Right ventricle myocardium superior (tissue), 1 donor: ENCODE measurements at regions of chr5 and their contacts with region 1.

Region 1: GRCh38 chr5:10424124-10424731 is 17.5 kb upstream of the ROPN1L start:
- DNase-seq: no peak
- ATAC-seq: peak; percentile 77

Region 2: DNA sequence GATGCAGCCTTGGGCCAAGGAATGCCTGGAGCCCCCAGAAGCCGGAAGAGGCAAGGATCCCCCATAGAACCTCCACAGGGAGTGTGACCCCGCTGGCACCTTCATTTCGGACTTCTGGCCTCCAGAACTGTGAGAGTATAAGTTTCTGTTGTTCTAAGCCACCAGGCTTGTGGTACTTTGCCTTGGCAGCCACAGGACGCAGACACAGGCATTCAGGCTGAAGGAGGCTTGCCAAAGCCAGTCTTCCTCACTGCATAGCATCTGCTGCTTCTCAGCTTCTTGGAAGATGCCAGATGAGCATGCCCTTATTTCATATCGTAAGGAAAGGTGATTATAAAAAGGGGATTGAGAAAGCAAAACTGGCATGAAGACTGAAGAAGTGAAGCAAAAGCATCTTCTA is 733.0 kb before region 1 on chr5:
- intact Hi-C with region 1: no loop called
- DNase-seq: no peak
- ATAC-seq: no peak

Region 3: DNA sequence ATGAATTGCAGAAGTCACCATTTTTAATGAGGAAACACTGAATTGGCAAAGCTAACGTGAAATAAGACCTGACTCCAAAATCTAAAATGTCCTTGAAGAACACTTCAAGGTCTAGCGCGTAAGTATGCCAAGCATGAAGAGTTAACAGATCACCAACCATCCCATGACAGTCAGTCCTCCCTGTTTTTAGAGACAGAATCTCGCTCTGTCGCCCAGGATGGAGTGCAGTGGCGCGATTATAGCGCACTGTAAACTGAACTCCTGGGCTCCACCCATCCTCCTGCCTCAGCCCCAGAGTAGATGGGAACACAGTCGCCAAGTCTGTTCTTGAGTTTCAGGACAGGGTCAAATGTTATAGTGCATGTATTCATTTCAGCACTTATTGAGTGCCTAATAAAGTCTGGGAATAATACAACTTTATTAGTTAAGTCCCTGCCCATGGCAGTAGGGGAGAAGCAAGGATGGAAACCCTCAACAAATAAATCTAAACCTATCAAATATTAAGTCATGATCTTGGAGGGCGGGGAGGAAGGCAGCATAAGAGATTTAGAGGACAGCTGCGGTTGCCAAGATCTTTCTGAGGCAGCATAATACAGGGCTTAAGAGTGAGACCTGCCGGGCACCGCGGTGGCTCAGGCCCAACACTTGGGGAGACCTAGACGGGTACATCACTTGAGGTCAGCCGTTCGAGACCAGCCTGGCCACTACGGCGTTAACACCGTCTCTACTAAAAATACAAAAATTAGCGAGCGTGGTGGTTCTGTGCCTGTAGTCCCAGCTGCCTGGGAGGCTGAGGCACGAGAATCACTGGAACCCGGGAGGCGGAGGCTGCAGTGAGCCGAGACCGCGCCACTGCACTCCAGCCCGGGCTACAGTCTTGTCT is 175.6 kb before region 1 on chr5:
- intact Hi-C with region 1: no loop called
- DNase-seq: peak; percentile 54
- ATAC-seq: peak; percentile 0

Region 4: GRCh38 chr5:10283927-10284635 is 140.1 kb before region 1 on chr5:
- intact Hi-C with region 1: loop called (anchors 10 kb)
- DNase-seq: peak; percentile 91
- ATAC-seq: peak; percentile 90

Region 5: GRCh38 chr5:10756549-10756948 is 332.3 kb after region 1 on chr5:
- intact Hi-C with region 1: no loop called
- DNase-seq: no peak
- ATAC-seq: no peak